ENCODE measurements at regions of chr6 and their contacts with region 1.

Region 1: DNA sequence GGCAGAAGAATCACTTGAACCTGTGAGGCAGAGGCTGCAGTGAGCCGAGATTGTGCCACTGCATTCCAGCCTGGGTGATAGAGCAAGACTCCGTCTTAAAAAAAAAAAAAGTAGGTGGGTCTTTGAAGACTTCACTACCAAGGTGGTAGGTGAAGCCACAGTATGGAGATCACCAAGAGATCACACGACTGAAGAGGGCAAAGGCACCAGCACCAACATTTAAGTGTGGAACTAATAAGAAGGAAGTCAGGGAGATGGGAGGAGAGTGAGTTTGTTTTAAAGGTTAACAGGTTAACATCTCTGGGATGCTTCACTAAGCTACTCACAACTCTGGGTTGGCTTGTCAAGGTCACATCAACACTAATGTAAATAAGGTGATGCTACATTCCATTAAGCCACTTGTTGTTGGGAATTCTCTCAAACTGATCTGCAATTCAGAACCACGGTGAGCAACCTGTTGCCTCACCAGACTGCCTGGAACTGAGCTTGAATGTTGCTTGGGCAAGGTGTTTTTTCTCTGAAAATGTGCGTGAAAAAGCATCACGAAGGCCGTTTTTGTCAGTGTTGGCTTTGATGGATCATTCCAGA is 48.7 kb downstream of the KCTD20 start:
- DNase-seq: no peak
- ATAC-seq: no peak
- H3K4me3 ChIP-seq: no peak overlapping the region
- H3K4me3 Mint-ChIP-seq: no peak overlapping the region
- H3K27ac ChIP-seq: no peak overlapping the region
- H3K27ac Mint-ChIP-seq: peak overlapping the region in 1 of 2 donors; percentile 45
- H3K4me1 ChIP-seq: peaks cover 6 to 7% of the 10 kb centered on the region in 2 experiments
- H3K4me1 Mint-ChIP-seq: peaks cover 12 to 43% (median 41%) of the 10 kb centered on the region in 3 donors
- H3K27me3 ChIP-seq: no peaks in the 10 kb centered on the region
- H3K27me3 Mint-ChIP-seq: no peaks in the 10 kb centered on the region

Region 2: GRCh38 chr6:35844290-35844689 is 647.2 kb before region 1 on chr6:
- CTCF ChIA-PET with region 1: no interaction called
- POLR2A ChIA-PET with region 1: no interaction called
- DNase-seq: no peak
- ATAC-seq: no peak
- H3K4me3 ChIP-seq: no peak overlapping the region
- H3K4me3 Mint-ChIP-seq: no peak overlapping the region
- H3K27ac ChIP-seq: no peak overlapping the region
- H3K27ac Mint-ChIP-seq: no peak overlapping the region
- H3K4me1 ChIP-seq: no peaks in the 10 kb centered on the region
- H3K4me1 Mint-ChIP-seq: no peaks in the 10 kb centered on the region
- H3K27me3 ChIP-seq: no peaks in the 10 kb centered on the region
- H3K27me3 Mint-ChIP-seq: no peaks in the 10 kb centered on the region

Region 3: DNA sequence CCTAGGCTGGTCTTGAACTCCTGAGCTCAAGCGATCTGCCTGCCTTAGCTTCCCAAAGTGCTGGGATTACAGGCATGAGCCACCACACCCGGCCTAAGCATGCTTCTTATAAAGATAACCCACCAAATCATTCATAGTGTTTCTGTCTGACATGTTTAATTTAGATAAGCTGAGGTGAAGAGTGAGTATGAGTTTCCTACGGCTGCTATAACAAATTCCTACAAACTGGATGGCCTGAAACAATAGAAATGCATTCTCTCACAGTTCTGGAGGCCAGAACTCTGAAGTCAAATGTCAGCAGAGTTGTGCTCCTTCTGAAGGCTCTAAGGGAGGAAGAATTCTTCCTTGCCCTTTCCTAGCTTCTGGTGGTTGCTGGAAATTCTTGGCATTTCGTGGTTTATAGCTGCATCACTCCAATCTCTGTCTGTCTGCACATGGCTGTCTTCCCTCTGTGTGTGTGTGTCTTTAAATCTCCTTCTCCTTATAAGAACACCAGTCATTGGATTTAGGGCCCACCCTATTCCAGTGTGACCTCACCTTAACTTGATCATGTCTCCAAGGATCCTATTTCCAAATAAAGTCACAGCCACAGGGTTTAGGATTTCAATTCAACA is 331.2 kb before region 1 on chr6:
- CTCF ChIA-PET with region 1: no interaction called
- POLR2A ChIA-PET with region 1: interaction called in 1 of 2 experiments, 16 read pairs
- DNase-seq: no peak
- ATAC-seq: no peak
- H3K4me3 ChIP-seq: no peak overlapping the region
- H3K4me3 Mint-ChIP-seq: no peak overlapping the region
- H3K27ac ChIP-seq: no peak overlapping the region
- H3K27ac Mint-ChIP-seq: no peak overlapping the region
- H3K4me1 ChIP-seq: no peaks in the 10 kb centered on the region
- H3K4me1 Mint-ChIP-seq: no peaks in the 10 kb centered on the region
- H3K27me3 ChIP-seq: no peaks in the 10 kb centered on the region
- H3K27me3 Mint-ChIP-seq: no peaks in the 10 kb centered on the region

Measured in T-cell (primary cell).